Posterior vena cava (tissue), 2 donors: ENCODE measurements at regions of chr5 and their contacts with region 1.

Region 1: DNA sequence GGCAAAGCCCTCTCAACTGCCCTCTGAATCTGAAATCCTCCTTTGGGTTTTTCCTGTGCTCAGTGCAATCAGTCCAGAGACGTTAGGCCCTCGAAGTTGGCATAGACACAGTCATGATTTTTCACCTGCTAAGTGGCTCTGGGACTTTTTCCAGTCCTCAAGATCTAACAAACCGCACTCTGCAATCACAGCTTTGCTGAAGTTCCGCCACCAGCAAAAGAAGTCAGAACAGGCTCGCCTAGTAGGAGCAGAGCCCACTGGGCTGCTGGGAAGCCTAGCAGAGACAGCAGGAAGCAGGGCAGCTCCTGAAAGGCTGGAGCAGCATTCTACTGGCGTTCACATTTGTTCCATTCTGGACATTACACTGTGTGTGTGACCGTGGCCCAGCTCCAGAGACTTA is 222.8 kb upstream of the KIF2A start:
- DNase-seq: no peak

Region 2: GRCh38 chr5:61586096-61587084 is 496.9 kb before region 1 on chr5:
- intact Hi-C with region 1: no loop called
- DNase-seq: no peak

Region 3: DNA sequence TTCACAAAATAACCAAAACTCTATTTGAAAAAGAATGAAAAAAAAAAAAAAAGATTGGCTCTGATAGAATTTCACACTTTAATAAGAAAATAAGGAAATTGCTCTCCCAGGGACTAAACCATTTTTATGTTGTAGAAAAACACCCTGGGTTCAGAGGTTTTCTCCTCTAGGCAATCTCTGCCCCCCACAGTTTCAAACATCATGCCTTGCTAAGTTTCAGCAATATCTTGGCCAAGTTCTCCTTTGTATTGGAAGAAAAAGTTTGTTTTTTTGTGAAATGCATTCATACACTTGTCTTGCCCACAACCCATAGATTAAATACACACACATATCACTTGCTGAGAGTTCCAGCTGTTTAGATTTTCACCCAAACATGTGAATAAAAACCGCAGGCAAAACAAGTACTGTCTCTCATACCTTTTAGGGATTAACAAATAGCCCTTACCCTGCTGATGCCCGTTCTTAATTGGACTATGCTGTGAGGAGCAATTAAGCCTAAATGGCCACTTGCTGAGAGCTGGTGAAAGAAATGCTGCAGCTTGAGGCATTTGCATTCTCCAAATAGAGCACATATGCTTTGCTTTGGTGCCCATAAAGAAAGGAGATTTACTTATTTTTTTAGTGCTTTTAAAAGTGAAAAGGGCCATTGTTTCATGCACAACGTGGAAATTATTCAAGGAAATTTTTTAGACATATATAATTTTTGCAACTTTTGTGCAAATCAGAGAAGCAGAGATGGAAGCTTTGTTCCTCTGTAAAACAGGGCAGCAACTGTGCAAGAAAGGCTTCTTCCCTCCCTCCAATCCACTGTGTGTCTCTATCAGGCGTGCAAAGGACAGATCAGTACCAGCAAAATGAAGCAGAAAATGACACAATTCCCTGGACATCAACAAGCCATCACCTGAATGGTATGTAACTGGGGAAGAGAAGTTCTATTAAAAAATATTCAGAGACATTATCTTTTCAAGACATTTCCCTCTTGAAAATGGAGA is 39.7 kb before region 1 on chr5:
- intact Hi-C with region 1: no loop called
- DNase-seq: no peak

Region 4: GRCh38 chr5:62093976-62094375 is 10.7 kb after region 1 on chr5:
- intact Hi-C with region 1: loop called in 1 of 2 experiments (anchors 1 kb)
- DNase-seq: no peak

Region 5: GRCh38 chr5:62134811-62135210 is 51.6 kb after region 1 on chr5:
- intact Hi-C with region 1: loop called in 1 of 2 experiments (anchors 1 kb)
- DNase-seq: no peak